Breast epithelium (tissue), 4 donors: ENCODE measurements at regions of chr6 and their contacts with region 1.

Region 1: GRCh38 chr6:75808507-75808906 is 59.5 kb downstream of the MYO6 start:
- DNase-seq: no peak
- H3K4me3 ChIP-seq: no peak overlapping the region
- H3K27ac ChIP-seq: no peak overlapping the region
- H3K4me1 ChIP-seq: no peaks in the 10 kb centered on the region
- H3K27me3 ChIP-seq: no peaks in the 10 kb centered on the region
- CTCF ChIP-seq: no peak
- POLR2A ChIP-seq: no peak

Region 2: DNA sequence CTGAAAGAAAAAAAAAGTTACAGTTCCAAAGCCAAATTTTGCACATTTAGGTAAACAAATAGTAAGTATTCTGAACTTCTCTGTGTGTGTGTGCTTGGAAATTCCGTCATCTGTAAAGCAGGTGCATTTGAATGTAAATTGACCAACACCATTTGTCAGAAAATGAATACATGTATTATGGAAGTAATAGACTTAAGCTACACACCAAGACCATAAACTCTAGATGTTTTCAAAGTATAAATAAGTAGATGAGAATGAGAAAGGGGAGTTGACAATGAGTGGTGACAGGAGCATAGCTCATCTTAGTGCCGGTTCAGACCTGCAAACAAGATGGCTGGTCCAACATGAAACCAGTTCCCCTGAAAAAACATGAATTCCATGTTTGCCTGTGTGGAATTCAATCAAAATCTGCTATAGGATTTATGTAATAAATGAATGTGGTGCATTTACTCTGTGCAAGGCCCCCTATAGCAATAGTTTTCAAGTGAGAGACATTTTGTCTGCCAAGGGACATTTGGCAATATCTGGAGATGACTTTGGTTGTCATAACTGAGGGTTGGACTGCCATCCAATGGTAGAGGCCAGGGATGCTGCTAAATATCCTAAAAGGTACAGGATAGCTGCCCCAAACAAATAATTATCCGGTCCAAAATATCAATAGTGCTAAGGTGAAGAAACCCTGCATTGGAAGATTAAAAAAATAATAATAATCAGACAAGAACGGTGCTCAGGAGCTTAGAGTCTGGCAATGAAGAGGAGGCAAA is 303.9 kb before region 1 on chr6:
- intact Hi-C with region 1: loop called (anchors 5 kb)
- DNase-seq: no peak
- H3K4me3 ChIP-seq: no peak overlapping the region
- H3K27ac ChIP-seq: no peak overlapping the region
- H3K4me1 ChIP-seq: no peaks in the 10 kb centered on the region
- H3K27me3 ChIP-seq: no peaks in the 10 kb centered on the region
- CTCF ChIP-seq: no peak
- POLR2A ChIP-seq: no peak

Region 3: GRCh38 chr6:75673885-75674284 is 134.6 kb before region 1 on chr6:
- intact Hi-C with region 1: no loop called
- DNase-seq: no peak
- H3K4me3 ChIP-seq: no peak overlapping the region
- H3K27ac ChIP-seq: no peak overlapping the region
- H3K4me1 ChIP-seq: no peaks in the 10 kb centered on the region
- H3K27me3 ChIP-seq: no peaks in the 10 kb centered on the region
- CTCF ChIP-seq: no peak
- POLR2A ChIP-seq: no peak